ENCODE measurements at regions of chr1 and their contacts with region 1.

Region 1: GRCh38 chr1:50774759-50775351 is 185.2 kb downstream of the FAF1 start:
- DNase-seq: peak; percentile 74
- H3K4me3 Mint-ChIP-seq: no peak overlapping the region
- H3K27ac Mint-ChIP-seq: no peak overlapping the region
- H3K4me1 Mint-ChIP-seq: no peaks in the 10 kb centered on the region
- H3K27me3 Mint-ChIP-seq: no peaks in the 10 kb centered on the region
- CTCF ChIP-seq: peak; percentile 64

Region 2: GRCh38 chr1:50796272-50796671 is 21.4 kb after region 1 on chr1:
- CTCF ChIA-PET with region 1: interaction called, 20 read pairs
- POLR2A ChIA-PET with region 1: interaction called, 4 read pairs
- intact Hi-C with region 1: no loop called
- DNase-seq: no peak
- H3K4me3 Mint-ChIP-seq: no peak overlapping the region
- H3K27ac Mint-ChIP-seq: peak overlapping the region; percentile 2
- H3K4me1 Mint-ChIP-seq: no peaks in the 10 kb centered on the region
- H3K27me3 Mint-ChIP-seq: no peaks in the 10 kb centered on the region
- CTCF ChIP-seq: no peak

Region 3: DNA sequence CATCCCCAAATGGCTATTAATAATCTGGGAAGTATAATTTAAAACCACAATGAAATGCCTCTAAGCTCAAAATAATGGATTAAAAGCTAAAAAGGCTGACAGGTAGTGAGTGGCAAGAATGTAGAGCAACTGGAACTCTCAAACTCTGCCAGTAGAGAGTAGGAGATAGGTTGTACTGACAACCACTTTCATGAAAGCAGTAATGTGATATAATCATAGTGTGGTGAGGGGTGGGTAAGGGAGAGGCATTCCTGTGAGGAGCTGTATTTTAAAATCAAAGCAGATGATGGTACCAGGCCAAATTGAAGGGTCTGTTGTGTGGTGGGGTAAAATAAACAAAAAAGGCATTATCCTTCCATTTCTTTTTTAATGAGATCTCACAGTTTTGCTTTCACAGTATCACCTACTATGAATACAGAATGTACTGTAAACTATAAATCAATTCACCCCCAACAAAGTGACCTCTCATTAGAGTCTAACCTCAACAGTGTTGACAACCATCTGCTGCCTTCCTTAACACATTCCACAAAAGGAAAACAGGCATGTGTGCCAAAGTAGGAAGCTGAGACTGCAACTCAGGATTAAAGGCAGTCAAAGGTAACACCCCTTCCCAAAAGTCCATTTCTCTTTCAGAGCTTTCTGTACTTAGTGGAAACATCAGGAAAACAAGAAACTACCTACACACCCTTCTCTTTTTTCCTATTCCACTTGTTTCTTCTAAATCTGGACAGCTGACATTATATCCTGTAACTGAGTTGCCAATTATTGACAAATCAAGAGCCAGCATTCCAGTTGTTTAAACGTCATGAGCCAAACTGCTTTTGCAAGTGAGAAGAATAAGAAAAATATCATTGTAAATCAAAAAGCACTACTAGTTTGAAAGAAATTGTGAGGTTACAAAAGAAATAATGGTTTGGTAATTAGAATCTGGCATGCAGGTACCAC is 54.4 kb after region 1 on chr1:
- CTCF ChIA-PET with region 1: no interaction called
- POLR2A ChIA-PET with region 1: no interaction called
- intact Hi-C with region 1: no loop called
- DNase-seq: no peak
- H3K4me3 Mint-ChIP-seq: no peak overlapping the region
- H3K27ac Mint-ChIP-seq: no peak overlapping the region
- H3K4me1 Mint-ChIP-seq: peaks cover 9% of the 10 kb centered on the region
- H3K27me3 Mint-ChIP-seq: no peaks in the 10 kb centered on the region
- CTCF ChIP-seq: no peak

Region 4: DNA sequence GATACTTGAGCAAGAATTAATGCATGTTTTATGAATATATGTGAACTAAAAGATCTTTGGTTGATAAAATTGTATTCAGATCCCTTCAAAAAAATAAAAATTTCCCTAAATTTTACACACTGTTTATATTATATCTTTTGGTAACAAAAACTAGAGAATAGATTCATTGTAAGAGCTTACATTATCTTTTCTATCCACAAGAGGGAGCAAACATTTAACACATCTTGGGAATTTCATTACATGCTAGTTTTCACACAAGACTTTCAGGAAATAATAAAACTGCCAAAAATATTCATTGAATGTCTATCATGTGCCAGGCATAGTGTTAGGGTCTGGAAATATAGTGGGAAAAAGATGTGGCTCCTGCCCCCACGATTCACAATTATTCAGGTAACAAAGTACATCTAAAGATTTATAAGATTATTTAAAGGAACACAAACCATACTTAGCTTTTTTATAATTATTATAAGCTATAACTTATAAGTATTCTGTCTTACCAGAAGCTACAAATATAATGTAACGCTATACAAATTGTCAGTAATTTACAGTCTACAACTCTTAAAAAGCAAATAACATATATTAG is 154.6 kb after region 1 on chr1:
- CTCF ChIA-PET with region 1: interaction called, 7 read pairs
- POLR2A ChIA-PET with region 1: no interaction called
- intact Hi-C with region 1: loop called (anchors 10 kb)
- DNase-seq: peak; percentile 37
- H3K4me3 Mint-ChIP-seq: no peak overlapping the region
- H3K27ac Mint-ChIP-seq: no peak overlapping the region
- H3K4me1 Mint-ChIP-seq: no peaks in the 10 kb centered on the region
- H3K27me3 Mint-ChIP-seq: no peaks in the 10 kb centered on the region
- CTCF ChIP-seq: peak; percentile 40

Region 5: GRCh38 chr1:51044834-51045233 is 270.0 kb after region 1 on chr1:
- CTCF ChIA-PET with region 1: interaction called, 4 read pairs
- POLR2A ChIA-PET with region 1: no interaction called
- intact Hi-C with region 1: loop called (anchors 5 kb)
- DNase-seq: peak; percentile 12
- H3K4me3 Mint-ChIP-seq: no peak overlapping the region
- H3K27ac Mint-ChIP-seq: no peak overlapping the region
- H3K4me1 Mint-ChIP-seq: no peaks in the 10 kb centered on the region
- H3K27me3 Mint-ChIP-seq: no peaks in the 10 kb centered on the region
- CTCF ChIP-seq: peak; percentile 18

Region 6: GRCh38 chr1:51203121-51203873 is 428.4 kb after region 1 on chr1:
- CTCF ChIA-PET with region 1: interaction called, 10 read pairs
- POLR2A ChIA-PET with region 1: no interaction called
- intact Hi-C with region 1: no loop called
- DNase-seq: no peak
- H3K4me3 Mint-ChIP-seq: no peak overlapping the region
- H3K27ac Mint-ChIP-seq: no peak overlapping the region
- H3K4me1 Mint-ChIP-seq: no peaks in the 10 kb centered on the region
- H3K27me3 Mint-ChIP-seq: no peaks in the 10 kb centered on the region
- CTCF ChIP-seq: no peak

Measured in MCF 10A (cell line).